Activated CD4-positive, alpha-beta memory T cell treated with anti-CD3 and anti-CD28 coated beads for 36 hours (primary cell): ENCODE measurements at regions of chr11 and their contacts with region 1.

Region 1: DNA sequence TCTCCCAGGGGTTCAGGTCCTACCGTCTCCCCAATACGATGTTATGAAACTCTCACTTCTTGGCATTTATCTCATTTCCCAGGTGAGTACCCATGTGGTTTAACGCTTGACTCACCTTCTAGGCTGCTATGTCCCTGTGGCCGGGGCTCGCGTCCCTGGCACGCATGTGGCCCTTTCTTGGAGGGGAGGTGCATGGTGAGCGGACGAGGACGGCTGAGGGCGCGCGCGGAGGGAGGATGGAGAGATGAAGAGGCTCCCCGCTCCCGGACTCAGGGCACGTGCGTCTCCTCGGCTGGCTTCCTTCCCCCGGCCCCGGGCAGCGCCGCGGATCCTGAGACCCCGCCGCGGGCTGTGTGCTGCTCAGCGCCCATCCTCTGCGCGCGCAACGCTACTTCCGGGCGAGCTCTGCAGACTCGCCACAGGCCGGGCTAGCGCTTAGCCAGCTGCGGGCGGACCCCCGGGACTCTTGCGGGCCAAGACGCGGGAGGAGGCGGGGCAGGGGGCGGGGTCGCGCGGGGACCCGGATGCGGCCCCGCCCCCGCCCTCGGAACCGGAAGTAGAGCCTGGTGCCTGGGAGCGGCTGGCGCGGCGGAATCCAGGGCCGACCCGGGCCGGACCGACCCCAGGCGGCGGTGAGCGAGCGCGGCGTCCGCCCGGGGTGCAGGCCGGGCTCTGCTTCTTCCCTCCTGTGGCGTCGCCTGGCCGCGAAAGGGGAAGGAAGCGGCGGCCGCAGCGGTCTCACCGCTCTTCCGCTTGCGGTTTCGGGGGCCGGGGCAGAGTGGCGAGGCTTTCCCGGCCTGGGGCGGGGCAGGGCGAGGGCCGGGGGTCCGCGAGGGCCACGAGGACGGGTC is at the start of gene CTTN:
- DNase-seq: peak; percentile 74
- H3K4me3 Mint-ChIP-seq: peak within 1 kb of the TSS; percentile 77
- H3K27ac Mint-ChIP-seq: peak within 1 kb of the TSS; percentile 73
- H3K4me1 Mint-ChIP-seq: peaks cover 29% of the 10 kb centered on the region
- H3K27me3 Mint-ChIP-seq: peaks cover 30% of the 10 kb centered on the region
- total RNA-seq, gene CTTN: 49.6 to 52.6 TPM

Region 2: DNA sequence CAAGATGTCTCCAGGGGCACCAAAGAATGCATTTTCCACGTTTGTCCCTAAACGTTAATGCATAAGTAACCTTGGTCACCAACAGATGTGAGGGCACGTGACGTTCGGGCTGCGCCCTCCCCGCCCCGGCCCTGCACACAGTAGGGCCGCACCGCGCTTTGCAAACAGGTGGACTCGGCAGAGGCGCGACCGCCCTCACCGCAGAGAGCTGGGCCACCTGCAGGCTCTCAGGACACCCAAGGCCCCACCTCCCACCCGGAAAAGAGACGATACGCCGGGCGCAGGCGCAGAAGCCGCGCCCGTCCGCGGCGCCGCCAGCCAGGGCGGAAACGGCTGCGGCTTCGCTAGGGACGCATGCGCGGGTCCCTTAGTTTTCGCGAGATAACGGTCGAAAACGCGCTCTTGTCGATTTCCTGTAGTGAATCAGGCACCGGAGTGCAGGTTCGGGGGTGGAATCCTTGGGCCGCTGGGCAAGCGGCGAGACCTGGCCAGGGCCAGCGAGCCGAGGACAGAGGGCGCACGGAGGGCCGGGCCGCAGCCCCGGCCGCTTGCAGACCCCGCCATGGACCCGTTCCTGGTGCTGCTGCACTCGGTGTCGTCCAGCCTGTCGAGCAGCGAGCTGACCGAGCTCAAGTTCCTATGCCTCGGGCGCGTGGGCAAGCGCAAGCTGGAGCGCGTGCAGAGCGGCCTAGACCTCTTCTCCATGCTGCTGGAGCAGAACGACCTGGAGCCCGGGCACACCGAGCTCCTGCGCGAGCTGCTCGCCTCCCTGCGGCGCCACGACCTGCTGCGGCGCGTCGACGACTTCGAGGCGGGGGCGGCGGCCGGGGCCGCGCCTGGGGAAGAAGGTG is 195.1 kb before region 1 on chr11 and contains the start of gene FADD:
- CTCF ChIA-PET with region 1: no interaction called
- POLR2A ChIA-PET with region 1: no interaction called
- intact Hi-C with region 1: loop called (anchors 5 kb)
- DNase-seq: peak; percentile 95
- H3K4me3 Mint-ChIP-seq: peak within 1 kb of the TSS; percentile 96
- H3K27ac Mint-ChIP-seq: peak within 1 kb of the TSS; percentile 99
- H3K4me1 Mint-ChIP-seq: peaks cover 37% of the 10 kb centered on the region
- H3K27me3 Mint-ChIP-seq: peaks cover 2% of the 10 kb centered on the region
- total RNA-seq, gene FADD: 31.8 to 33.9 TPM

Region 3: GRCh38 chr11:70270104-70270876 is 127.9 kb before region 1 on chr11 and contains the start of gene PPFIA1:
- CTCF ChIA-PET with region 1: no interaction called
- POLR2A ChIA-PET with region 1: no interaction called
- intact Hi-C with region 1: loop called (anchors 2 kb)
- DNase-seq: peak; percentile 95
- H3K4me3 Mint-ChIP-seq: peak within 1 kb of the TSS; percentile 88
- H3K27ac Mint-ChIP-seq: peak within 1 kb of the TSS; percentile 16
- H3K4me1 Mint-ChIP-seq: peaks cover 41% of the 10 kb centered on the region
- H3K27me3 Mint-ChIP-seq: peaks cover 12% of the 10 kb centered on the region
- total RNA-seq, gene PPFIA1: 23.1 to 26.7 TPM

Region 4: GRCh38 chr11:70297341-70297740 is 100.9 kb before region 1 on chr11:
- CTCF ChIA-PET with region 1: no interaction called
- POLR2A ChIA-PET with region 1: no interaction called
- intact Hi-C with region 1: no loop called
- DNase-seq: no peak
- H3K4me3 Mint-ChIP-seq: no peak overlapping the region
- H3K27ac Mint-ChIP-seq: peak overlapping the region; percentile 23
- H3K4me1 Mint-ChIP-seq: peaks cover 27% of the 10 kb centered on the region
- H3K27me3 Mint-ChIP-seq: no peaks in the 10 kb centered on the region

Region 5: GRCh38 chr11:70324376-70325115 is 73.7 kb before region 1 on chr11:
- CTCF ChIA-PET with region 1: no interaction called
- POLR2A ChIA-PET with region 1: no interaction called
- intact Hi-C with region 1: no loop called
- DNase-seq: no peak
- H3K4me3 Mint-ChIP-seq: no peak overlapping the region
- H3K27ac Mint-ChIP-seq: no peak overlapping the region
- H3K4me1 Mint-ChIP-seq: peaks cover 3% of the 10 kb centered on the region
- H3K27me3 Mint-ChIP-seq: no peaks in the 10 kb centered on the region

Region 6: DNA sequence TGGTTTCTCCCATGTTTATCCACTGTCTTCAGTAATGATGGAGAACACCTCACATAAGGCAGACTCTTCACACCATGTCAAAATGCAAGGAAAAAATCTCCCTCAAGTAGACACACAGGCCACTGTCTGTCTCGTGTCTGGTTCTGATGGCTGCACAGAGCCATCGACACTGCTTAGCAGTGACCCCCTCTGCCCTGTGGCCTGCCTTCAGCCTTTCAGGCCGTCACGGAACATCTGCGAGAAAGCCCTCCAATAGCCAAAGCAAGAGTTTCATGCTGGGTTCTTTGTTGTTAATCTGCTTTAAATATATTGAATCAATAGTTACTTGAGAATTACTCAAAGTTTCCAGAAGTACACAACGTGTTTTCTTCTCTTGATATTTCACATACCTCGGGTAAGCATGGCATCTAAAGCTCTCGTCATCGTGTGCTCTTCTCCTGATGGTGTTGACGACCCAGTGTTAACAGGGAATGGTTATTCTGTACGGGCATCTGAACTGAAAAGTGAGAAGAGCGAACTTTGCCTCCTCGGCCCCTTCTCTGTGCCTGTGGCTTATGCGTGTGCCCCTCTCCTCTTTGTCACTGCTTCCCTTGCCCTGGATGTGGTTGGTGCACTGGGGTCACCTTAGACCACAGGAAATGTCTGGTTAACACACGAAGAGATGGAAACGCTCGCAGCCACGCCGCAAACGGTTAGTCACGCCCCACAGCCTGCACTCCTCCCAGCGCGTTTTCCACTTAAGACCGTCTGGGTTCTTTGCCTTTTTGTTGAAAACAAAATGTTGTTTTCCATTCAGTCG is 33.3 kb before region 1 on chr11:
- CTCF ChIA-PET with region 1: no interaction called
- POLR2A ChIA-PET with region 1: no interaction called
- intact Hi-C with region 1: loop called (anchors 1 kb)
- DNase-seq: peak; percentile 88
- H3K4me3 Mint-ChIP-seq: peak overlapping the region; percentile 65
- H3K27ac Mint-ChIP-seq: peak overlapping the region; percentile 86
- H3K4me1 Mint-ChIP-seq: peaks cover 24% of the 10 kb centered on the region
- H3K27me3 Mint-ChIP-seq: no peaks in the 10 kb centered on the region

Region 7: DNA sequence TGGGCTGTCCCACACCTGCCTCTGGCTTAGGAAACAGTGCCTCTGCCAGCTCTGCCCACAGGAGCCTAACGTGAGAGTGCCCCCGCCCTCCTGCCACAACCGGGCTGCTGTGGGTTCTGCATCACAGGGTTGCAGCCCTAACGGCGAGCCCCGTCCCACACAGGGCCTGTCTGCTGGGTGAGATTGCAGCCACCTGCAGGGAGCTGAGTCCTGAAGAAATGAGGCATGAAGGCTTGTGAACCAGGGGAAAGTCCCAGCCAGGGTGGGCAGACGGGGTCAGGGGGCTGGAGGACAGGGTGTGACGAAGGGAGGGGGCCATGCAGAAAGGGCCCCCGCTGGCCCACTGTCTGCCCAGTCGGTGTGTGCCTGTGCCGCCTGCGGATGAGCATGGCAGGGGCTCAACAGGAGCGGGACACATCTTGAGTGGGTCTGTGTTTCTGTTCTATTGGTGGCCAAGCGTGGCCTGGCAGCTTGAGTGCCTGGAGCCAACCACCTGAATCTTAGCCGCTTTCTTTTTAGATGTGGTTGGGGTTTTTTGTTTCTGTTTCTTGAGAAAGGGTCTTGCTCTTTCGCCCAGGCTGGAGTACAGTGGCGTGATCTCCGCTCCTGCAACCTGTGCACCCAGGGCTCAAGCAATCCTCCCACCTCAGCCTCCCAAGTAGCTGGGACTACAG is 39.0 kb after region 1 on chr11:
- CTCF ChIA-PET with region 1: no interaction called
- POLR2A ChIA-PET with region 1: no interaction called
- intact Hi-C with region 1: no loop called
- DNase-seq: no peak
- H3K4me3 Mint-ChIP-seq: no peak overlapping the region
- H3K27ac Mint-ChIP-seq: no peak overlapping the region
- H3K4me1 Mint-ChIP-seq: no peaks in the 10 kb centered on the region
- H3K27me3 Mint-ChIP-seq: peaks cover 2% of the 10 kb centered on the region